Gastrocnemius medialis (tissue), 4 donors: ENCODE measurements at regions of chr21 and their contacts with region 1.

Region 1: GRCh38 chr21:33641336-33642026 is at the start of gene CRYZL1:
- DNase-seq: peak; percentile 100
- ATAC-seq: peak; percentile 91 to 92
- H3K4me3 ChIP-seq: peak within 1 kb of the TSS; percentile 64 to 84 (median 71)
- H3K27ac ChIP-seq: peak within 1 kb of the TSS; percentile 80 to 92 (median 87)
- H3K4me1 ChIP-seq: peaks cover 23 to 31% of the 10 kb centered on the region in 2 donors
- H3K27me3 ChIP-seq: no peaks in the 10 kb centered on the region
- CTCF ChIP-seq: no peak
- POLR2A ChIP-seq: peak; percentile 36 to 50
- total RNA-seq, gene CRYZL1: 14.8 to 29.4 (median 24.4) TPM

Region 2: GRCh38 chr21:32727687-32728455 is 913.6 kb before region 1 on chr21 and contains the start of gene SYNJ1:
- in situ Hi-C with region 1: no loop called
- intact Hi-C with region 1: loop called (anchors 10 kb)
- DNase-seq: peak; percentile 91 to 92
- ATAC-seq: peak; percentile 96 to 97
- H3K4me3 ChIP-seq: peak within 1 kb of the TSS; percentile 77 to 94 (median 92)
- H3K27ac ChIP-seq: peak within 1 kb of the TSS; percentile 83 to 94 (median 94)
- H3K4me1 ChIP-seq: peaks cover 14 to 19% of the 10 kb centered on the region in 2 donors
- H3K27me3 ChIP-seq: no peaks in the 10 kb centered on the region
- CTCF ChIP-seq: no peak
- POLR2A ChIP-seq: peak; percentile 83
- total RNA-seq, gene SYNJ1: 10.0 to 34.8 (median 10.8) TPM

Region 3: DNA sequence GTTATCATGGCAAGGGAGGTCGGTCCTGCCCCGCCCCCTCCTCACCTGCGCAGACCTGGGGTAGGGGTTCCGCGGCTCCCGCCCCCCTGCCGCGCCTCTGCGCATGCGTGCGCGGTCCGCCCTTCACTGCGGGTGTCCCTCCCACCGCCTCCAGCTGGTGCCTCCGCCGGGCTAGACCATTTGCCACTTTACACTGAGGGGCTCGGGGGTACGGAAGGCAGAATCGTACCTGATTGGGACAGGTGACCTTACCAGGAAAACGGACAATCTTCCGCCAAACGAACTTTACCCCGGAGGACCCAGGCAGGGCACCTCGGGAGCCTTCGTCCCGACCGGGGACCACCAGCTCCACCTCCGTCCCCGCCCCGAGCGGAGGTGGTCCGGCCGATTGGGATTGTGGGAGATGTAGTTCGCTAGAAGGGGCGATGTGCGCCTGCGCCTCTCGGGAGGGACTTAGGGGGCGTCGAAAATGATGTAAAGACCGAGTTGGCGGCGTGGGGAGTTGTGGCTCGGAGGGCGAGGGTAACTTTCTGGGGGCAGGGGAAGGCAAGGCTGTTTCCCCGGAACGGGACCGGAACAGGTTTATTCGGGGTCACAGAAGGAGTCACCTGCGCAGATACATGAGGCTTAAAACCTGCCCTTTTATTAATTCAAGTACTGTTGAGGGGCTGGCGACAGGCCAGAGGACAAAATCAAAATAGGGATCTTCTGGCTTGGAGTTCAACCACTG is 149.9 kb before region 1 on chr21 and contains the start of gene DNAJC28:
- in situ Hi-C with region 1: no loop called
- intact Hi-C with region 1: loop called (anchors 2 kb)
- DNase-seq: peak; percentile 81 to 88
- ATAC-seq: peak; percentile 97 to 99
- H3K4me3 ChIP-seq: peak within 1 kb of the TSS; percentile 59 to 93 (median 82)
- H3K27ac ChIP-seq: peak within 1 kb of the TSS; percentile 86 to 91 (median 88)
- H3K4me1 ChIP-seq: peaks cover 3 to 12% of the 10 kb centered on the region in 2 donors
- H3K27me3 ChIP-seq: no peaks in the 10 kb centered on the region
- CTCF ChIP-seq: no peak
- POLR2A ChIP-seq: peak; percentile 44 to 50
- total RNA-seq, gene DNAJC28: 1.5 to 3.4 (median 2.5) TPM

Region 4: DNA sequence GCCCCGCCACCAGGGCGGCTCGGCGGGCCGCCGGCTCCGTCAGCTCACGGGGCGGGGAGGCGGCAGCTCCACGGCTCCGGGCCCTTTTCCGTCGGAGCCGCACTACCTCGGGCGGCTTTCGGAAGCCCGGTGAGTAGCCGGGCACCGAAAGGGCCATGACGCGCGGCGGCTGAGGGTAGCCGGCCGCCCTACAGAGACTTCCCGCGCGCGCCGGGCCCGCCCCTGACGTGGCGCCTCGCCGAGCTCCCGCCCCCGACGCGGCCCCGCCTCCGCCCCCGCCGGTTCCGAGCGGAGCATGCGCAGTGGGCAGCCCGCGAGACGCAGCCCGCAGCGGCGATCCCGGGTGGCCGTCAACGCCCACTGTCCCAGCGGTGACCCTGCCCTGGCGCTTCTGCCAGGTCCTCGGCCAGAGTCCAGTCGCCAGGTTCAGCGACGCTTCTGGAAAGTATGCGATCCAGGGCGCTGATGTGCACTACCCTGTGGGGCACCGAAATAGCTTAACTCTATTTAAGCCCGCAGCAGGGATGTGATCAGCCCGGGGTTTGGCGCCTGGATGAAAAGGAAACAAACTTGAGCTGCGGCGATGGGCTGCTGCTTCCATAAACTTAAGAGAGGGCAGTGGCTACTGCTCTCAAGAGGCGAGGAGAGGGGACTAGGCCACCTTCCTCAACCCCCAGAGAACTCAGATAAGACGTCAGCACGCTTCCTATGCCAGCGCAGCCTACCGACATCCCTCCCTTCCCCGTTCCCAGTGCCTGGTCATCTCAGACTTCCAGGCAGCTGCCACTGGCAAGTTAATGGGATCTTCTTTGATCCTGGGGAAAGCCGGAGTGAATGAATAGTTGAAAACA is 52.8 kb before region 1 on chr21 and contains the start of gene DONSON:
- in situ Hi-C with region 1: no loop called
- intact Hi-C with region 1: loop called (anchors 2 kb)
- DNase-seq: peak; percentile 63 to 87
- ATAC-seq: peak; percentile 93 to 95
- H3K4me3 ChIP-seq: peak within 1 kb of the TSS; percentile 55 to 75 (median 70)
- H3K27ac ChIP-seq: peak within 1 kb of the TSS; percentile 78 to 90 (median 84)
- H3K4me1 ChIP-seq: peaks cover 10 to 14% of the 10 kb centered on the region in 2 donors
- H3K27me3 ChIP-seq: no peaks in the 10 kb centered on the region
- CTCF ChIP-seq: peak in 2 of 5 experiments; percentile 6
- POLR2A ChIP-seq: peak; percentile 55 to 68
- total RNA-seq, gene DONSON: 3.6 to 5.3 (median 4.2) TPM

Region 5: GRCh38 chr21:33894736-33895288 is 253.3 kb after region 1 on chr21:
- in situ Hi-C with region 1: loop called in 1 of 4 experiments (anchors 10 kb)
- intact Hi-C with region 1: no loop called
- DNase-seq: peak; percentile 51 to 53
- ATAC-seq: peak; percentile 75 to 80
- H3K4me3 ChIP-seq: peak overlapping the region; percentile 15 to 42 (median 41)
- H3K27ac ChIP-seq: no peak overlapping the region
- H3K4me1 ChIP-seq: peaks cover 5 to 9% of the 10 kb centered on the region in 2 donors
- H3K27me3 ChIP-seq: no peaks in the 10 kb centered on the region
- CTCF ChIP-seq: peak; percentile 24 to 59 (median 36)
- POLR2A ChIP-seq: no peak

Region 6: GRCh38 chr21:33915368-33916199 is 274.1 kb after region 1 on chr21 and contains the start of gene ATP5PO:
- in situ Hi-C with region 1: no loop called
- intact Hi-C with region 1: loop called (anchors 5 kb)
- DNase-seq: peak; percentile 97 to 98
- ATAC-seq: peak; percentile 95 to 97
- H3K4me3 ChIP-seq: peak within 1 kb of the TSS; percentile 86 to 96 (median 90)
- H3K27ac ChIP-seq: peak within 1 kb of the TSS; percentile 88 to 93 (median 92)
- H3K4me1 ChIP-seq: peaks cover 17 to 26% of the 10 kb centered on the region in 2 donors
- H3K27me3 ChIP-seq: no peaks in the 10 kb centered on the region
- CTCF ChIP-seq: peak in 1 of 5 experiments; percentile 10
- POLR2A ChIP-seq: peak; percentile 82 to 86
- total RNA-seq, gene ATP5PO: 261 to 560 (median 356) TPM